A549 (cell line): ENCODE measurements at regions of chr2 and their contacts with region 1.

Region 1: GRCh38 chr2:205680067-205680466 is 2.2 kb upstream of the NRP2 start:
- DNase-seq: peak; percentile 59 to 96
- ATAC-seq: peak; percentile 56 to 81
- H3K4me3 ChIP-seq: no peak overlapping the region
- H3K27ac ChIP-seq: peak overlapping the region; percentile 25 to 98; a peak in 4 of 6 replicates
- H3K4me1 ChIP-seq: peaks cover 22% of the 10 kb centered on the region
- CTCF ChIP-seq: peak; percentile 86
- EP300 ChIP-seq: no peak
- POLR2A ChIP-seq: no peak
- RAD21 ChIP-seq: peak; percentile 72 to 77

Region 2: DNA sequence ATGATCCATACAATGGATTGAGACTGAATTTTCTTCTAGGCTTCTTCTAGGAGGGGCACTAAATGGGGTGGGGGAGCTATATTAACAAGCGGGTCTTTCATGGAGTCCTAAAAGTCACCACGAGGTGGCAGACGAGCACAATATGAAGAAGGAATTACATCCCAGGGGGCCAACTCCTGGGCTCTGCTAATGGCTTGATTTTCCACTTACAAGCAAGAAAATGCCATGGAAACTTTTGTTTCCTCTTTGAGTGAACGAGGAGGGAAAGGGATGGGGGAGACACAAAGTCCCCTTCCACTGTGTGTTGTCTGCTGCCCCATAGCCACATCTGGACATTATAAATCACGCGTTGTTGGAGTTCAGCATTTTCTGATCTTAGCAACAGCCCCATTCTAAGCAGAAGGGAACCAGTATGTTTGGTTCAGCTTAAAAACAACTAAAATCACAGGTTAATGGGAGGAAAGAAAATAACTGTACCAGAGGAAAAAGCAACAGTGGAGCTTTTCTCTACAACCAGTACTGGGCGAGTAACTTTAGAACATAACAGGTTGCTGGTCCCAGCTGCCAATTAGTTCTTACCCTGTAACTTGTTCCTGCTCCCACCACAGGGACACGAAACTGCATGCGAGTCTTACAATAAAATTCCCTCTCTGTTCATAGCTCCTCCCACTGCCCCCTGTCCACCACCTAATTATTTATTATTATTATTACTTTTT is 1419.7 kb before region 1 on chr2:
- CTCF ChIA-PET with region 1: interaction called, 30 read pairs
- POLR2A ChIA-PET with region 1: no interaction called
- DNase-seq: peak; percentile 63 to 70
- ATAC-seq: peak; percentile 77 to 97; a peak in 4 of 6 replicates
- H3K4me3 ChIP-seq: no peak overlapping the region
- H3K27ac ChIP-seq: no peak overlapping the region
- H3K4me1 ChIP-seq: no peaks in the 10 kb centered on the region
- CTCF ChIP-seq: peak; percentile 89
- EP300 ChIP-seq: no peak
- POLR2A ChIP-seq: no peak
- RAD21 ChIP-seq: peak; percentile 79 to 84

Region 3: GRCh38 chr2:204871231-204871953 is 808.7 kb before region 1 on chr2:
- CTCF ChIA-PET with region 1: interaction called, 56 read pairs
- POLR2A ChIA-PET with region 1: interaction called, 4 read pairs
- DNase-seq: peak; percentile 3 to 44
- ATAC-seq: peak; percentile 62 to 66; a peak in 3 of 6 replicates
- H3K4me3 ChIP-seq: no peak overlapping the region
- H3K27ac ChIP-seq: no peak overlapping the region
- H3K4me1 ChIP-seq: no peaks in the 10 kb centered on the region
- CTCF ChIP-seq: peak; percentile 67
- EP300 ChIP-seq: no peak
- POLR2A ChIP-seq: no peak
- RAD21 ChIP-seq: peak; percentile 72 to 79

Region 4: DNA sequence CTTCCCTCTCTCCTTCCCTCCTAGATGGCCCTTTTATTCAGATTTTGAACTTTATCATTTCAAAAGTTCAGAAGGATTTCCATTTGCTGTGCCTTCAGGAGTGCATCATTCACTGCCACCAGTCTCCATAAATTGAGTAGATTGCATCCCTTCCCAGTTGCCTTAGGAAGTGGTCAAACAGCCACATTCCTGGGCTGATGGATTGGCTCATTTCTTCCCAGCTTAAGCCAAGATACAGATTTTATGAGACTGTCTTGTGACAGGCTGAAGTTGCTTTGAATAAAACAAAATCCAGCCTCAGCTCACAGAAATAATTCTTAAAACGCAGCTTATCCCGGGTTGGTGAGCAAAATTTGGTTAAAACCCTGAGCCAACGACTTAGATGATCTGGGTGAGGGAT is 12.0 kb after region 1 on chr2:
- CTCF ChIA-PET with region 1: interaction called, 33 read pairs
- POLR2A ChIA-PET with region 1: interaction called, 20 read pairs
- DNase-seq: no peak
- ATAC-seq: no peak
- H3K4me3 ChIP-seq: no peak overlapping the region
- H3K27ac ChIP-seq: peak overlapping the region; percentile 13 to 66; a peak in 4 of 6 replicates
- H3K4me1 ChIP-seq: peaks cover 99% of the 10 kb centered on the region
- CTCF ChIP-seq: no peak
- EP300 ChIP-seq: no peak
- POLR2A ChIP-seq: no peak
- RAD21 ChIP-seq: no peak

Region 5: DNA sequence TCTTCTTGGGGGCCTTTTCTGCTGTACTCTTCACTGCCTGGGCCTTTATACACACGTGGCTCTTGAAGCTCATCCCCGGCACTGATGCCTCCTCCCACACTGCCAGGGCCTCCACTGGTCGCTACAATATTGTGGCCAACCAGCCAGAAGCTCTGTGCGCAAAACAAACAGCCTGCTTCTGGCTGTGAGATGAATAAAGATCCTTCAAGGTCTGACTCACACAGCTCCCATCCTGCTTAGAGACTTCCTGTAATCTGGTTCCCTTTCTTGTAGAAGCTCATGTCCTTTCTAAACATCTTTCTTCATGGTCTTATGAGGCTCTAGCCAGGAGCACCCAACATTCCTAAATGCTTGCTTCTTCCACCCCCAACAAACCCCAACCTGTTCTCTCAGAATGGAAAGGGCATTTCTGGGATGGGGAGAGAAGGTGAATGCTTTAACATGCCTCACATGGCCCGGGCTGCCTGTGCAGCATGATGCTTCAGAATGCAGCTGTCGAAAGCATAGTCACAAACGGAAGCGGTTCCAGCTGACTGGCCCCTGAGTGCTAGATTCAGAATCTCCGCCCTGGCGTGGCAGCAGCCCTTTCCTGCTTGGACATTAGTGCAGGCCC is 26.8 kb after region 1 on chr2:
- CTCF ChIA-PET with region 1: interaction called, 14 read pairs
- POLR2A ChIA-PET with region 1: interaction called, 26 read pairs
- DNase-seq: peak in 1 of 2 experiments; percentile 77
- ATAC-seq: peak; percentile 81 to 88
- H3K4me3 ChIP-seq: no peak overlapping the region
- H3K27ac ChIP-seq: peak overlapping the region; percentile 93 to 95
- H3K4me1 ChIP-seq: peaks cover 87% of the 10 kb centered on the region
- CTCF ChIP-seq: no peak
- EP300 ChIP-seq: no peak
- POLR2A ChIP-seq: no peak
- RAD21 ChIP-seq: no peak

Region 6: GRCh38 chr2:205925373-205926337 is 245.6 kb after region 1 on chr2:
- CTCF ChIA-PET with region 1: interaction called, 10 read pairs
- POLR2A ChIA-PET with region 1: no interaction called
- DNase-seq: peak; percentile 60 to 68
- ATAC-seq: peak; percentile 93 to 99
- H3K4me3 ChIP-seq: peak overlapping the region; percentile 19; the same call in 1 of the 3 replicates
- H3K27ac ChIP-seq: peak overlapping the region in 1 of 2 experiments; percentile 61; a peak in 1 of 6 replicates
- H3K4me1 ChIP-seq: 0 out of 3 replicates have a peak, but pooled peaks cover 2% of the 10 kb centered on the region
- CTCF ChIP-seq: peak; percentile 93
- EP300 ChIP-seq: no peak
- POLR2A ChIP-seq: no peak
- RAD21 ChIP-seq: peak; percentile 92 to 98